Psoas muscle (tissue), 8 donors: ENCODE measurements at regions of chr6 and their contacts with region 1.

Region 1: DNA sequence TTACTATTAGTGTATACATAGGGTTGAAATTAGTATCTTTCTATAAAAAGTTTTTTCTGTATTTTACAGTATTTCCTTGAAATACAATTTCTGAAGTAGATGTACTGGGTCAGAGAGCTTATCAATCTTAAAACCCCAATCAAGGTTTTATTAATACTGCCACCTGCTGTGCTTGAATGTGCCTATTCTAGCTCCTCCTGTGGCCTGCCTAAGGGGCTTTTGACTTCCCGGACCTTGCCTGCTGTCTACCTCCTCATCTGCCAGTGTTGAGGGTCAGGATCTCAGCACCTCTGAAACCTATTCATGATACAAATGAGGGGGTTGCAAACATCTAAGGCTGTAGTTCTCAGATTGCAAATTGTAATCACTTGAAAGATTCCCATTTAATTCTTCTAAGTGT is 9.2 kb downstream of the PACRG start:
- DNase-seq: no peak
- ATAC-seq: peak in 2 of 4 donors; percentile 58 to 60
- H3K4me3 ChIP-seq: no peak overlapping the region
- H3K27ac ChIP-seq: no peak overlapping the region
- H3K4me1 ChIP-seq: no peaks in the 10 kb centered on the region
- H3K27me3 ChIP-seq: no peaks in the 10 kb centered on the region
- CTCF ChIP-seq: peak; percentile 46

Region 2: GRCh38 chr6:162525181-162525580 is 211.8 kb before region 1 on chr6:
- intact Hi-C with region 1: no loop called
- DNase-seq: no peak
- ATAC-seq: no peak
- H3K4me3 ChIP-seq: no peak overlapping the region
- H3K27ac ChIP-seq: no peak overlapping the region
- H3K4me1 ChIP-seq: no peaks in the 10 kb centered on the region
- H3K27me3 ChIP-seq: no peaks in the 10 kb centered on the region
- CTCF ChIP-seq: no peak

Region 3: DNA sequence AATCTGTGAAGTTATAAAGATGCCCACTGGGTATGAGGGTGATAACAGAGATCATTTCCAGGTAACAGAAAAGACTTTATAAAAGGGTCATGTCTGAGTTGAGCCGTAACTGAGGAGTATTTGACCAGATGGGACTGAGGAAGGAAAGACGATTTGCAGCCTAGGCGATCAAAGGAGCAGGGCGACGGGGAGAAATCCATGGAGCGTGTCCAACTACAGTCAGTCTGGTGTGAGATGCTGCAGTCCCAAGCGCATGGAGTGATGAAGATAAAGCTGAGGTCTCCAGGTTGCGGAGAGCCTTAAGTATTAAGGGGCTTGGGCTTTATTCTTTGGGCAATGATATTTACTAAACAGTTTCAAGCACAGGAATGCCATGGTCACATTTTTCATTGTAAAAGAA is 176.1 kb before region 1 on chr6:
- intact Hi-C with region 1: loop called in 1 of 2 experiments (anchors 5 kb)
- DNase-seq: no peak
- ATAC-seq: no peak
- H3K4me3 ChIP-seq: no peak overlapping the region
- H3K27ac ChIP-seq: no peak overlapping the region
- H3K4me1 ChIP-seq: no peaks in the 10 kb centered on the region
- H3K27me3 ChIP-seq: no peaks in the 10 kb centered on the region
- CTCF ChIP-seq: no peak

Region 4: GRCh38 chr6:163260111-163260895 is 523.3 kb after region 1 on chr6:
- intact Hi-C with region 1: no loop called
- DNase-seq: peak; percentile 32 to 62
- ATAC-seq: peak in 3 of 4 donors; percentile 9 to 46 (median 34)
- H3K4me3 ChIP-seq: peak overlapping the region; percentile 49
- H3K27ac ChIP-seq: no peak overlapping the region
- H3K4me1 ChIP-seq: peaks cover 5% of the 10 kb centered on the region
- H3K27me3 ChIP-seq: no peaks in the 10 kb centered on the region
- CTCF ChIP-seq: no peak